ENCODE measurements at regions of chr10 and their contacts with region 1.

Region 1: GRCh38 chr10:70925377-70926225 is 37.2 kb upstream of the PCBD1 start:
- DNase-seq: peak in 2 of 5 donors; percentile 44 to 61
- ATAC-seq: peak; percentile 66 to 85 (median 76)
- H3K4me3 ChIP-seq: no peak overlapping the region
- H3K27ac ChIP-seq: peak overlapping the region in 3 of 12 donors; percentile 12 to 36 (median 19)
- H3K4me1 ChIP-seq: peaks cover 0 to 11% (median 0%) of the 10 kb centered on the region in 12 donors
- H3K27me3 ChIP-seq: peaks cover 0 to 4% (median 0%) of the 10 kb centered on the region in 9 donors
- CTCF ChIP-seq: peak; percentile 87 to 99 (median 96)
- POLR2A ChIP-seq: no peak

Region 2: GRCh38 chr10:70866424-70866823 is 59.2 kb before region 1 on chr10:
- intact Hi-C with region 1: no loop called
- DNase-seq: peak in 1 of 5 donors; percentile 41
- ATAC-seq: peak in 3 of 4 donors; percentile 39 to 68 (median 67)
- H3K4me3 ChIP-seq: no peak overlapping the region
- H3K27ac ChIP-seq: peak overlapping the region in 1 of 12 donors; percentile 54
- H3K4me1 ChIP-seq: peaks cover 0 to 17% (median 0%) of the 10 kb centered on the region in 12 donors
- H3K27me3 ChIP-seq: no peaks in the 10 kb centered on the region
- CTCF ChIP-seq: no peak
- POLR2A ChIP-seq: no peak

Region 3: DNA sequence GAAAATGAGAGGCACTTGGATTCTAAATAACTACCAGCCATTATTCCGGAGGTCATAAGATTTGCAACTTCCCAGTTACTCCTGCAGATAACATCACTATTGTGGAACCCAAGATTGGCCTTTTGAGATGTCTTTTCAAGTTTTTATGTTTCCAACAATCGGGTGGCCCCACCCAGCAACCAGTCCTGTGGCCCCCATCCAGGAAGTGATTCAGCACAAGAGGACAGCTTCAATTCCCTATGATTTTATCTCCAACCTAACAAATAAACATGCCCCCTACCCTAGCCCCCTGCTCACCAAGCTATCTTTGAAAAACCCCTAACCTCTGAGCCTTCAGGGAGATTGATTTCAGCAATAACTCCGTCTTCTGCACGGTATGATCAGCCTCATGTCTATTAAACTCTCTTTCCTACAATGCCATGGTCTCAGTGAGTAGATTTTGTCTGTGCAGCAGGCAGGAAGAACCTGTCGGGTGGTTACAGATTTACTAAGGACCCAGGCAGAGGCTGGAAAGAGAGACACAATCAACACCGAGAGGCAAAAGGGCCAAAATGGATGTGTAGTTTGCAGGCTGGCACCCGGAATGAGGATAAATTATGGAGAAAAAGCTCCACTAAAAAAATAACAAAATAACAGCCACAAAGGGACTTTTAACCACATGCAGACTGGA is 202.8 kb after region 1 on chr10:
- intact Hi-C with region 1: loop called in 1 of 10 experiments (anchors 10 kb)
- DNase-seq: peak in 3 of 5 donors; percentile 35 to 47 (median 41)
- ATAC-seq: no peak
- H3K4me3 ChIP-seq: no peak overlapping the region
- H3K27ac ChIP-seq: peak overlapping the region in 1 of 12 donors; percentile 16
- H3K4me1 ChIP-seq: peaks cover 0 to 18% (median 0%) of the 10 kb centered on the region in 12 donors
- H3K27me3 ChIP-seq: peaks cover 0 to 9% (median 0%) of the 10 kb centered on the region in 9 donors
- CTCF ChIP-seq: no peak
- POLR2A ChIP-seq: no peak

Measured in heart left ventricle (tissue), 16 donors.